Naive thymus-derived CD4-positive, alpha-beta T cell (primary cell): ENCODE measurements at regions of chr10 and their contacts with region 1.

Region 1: DNA sequence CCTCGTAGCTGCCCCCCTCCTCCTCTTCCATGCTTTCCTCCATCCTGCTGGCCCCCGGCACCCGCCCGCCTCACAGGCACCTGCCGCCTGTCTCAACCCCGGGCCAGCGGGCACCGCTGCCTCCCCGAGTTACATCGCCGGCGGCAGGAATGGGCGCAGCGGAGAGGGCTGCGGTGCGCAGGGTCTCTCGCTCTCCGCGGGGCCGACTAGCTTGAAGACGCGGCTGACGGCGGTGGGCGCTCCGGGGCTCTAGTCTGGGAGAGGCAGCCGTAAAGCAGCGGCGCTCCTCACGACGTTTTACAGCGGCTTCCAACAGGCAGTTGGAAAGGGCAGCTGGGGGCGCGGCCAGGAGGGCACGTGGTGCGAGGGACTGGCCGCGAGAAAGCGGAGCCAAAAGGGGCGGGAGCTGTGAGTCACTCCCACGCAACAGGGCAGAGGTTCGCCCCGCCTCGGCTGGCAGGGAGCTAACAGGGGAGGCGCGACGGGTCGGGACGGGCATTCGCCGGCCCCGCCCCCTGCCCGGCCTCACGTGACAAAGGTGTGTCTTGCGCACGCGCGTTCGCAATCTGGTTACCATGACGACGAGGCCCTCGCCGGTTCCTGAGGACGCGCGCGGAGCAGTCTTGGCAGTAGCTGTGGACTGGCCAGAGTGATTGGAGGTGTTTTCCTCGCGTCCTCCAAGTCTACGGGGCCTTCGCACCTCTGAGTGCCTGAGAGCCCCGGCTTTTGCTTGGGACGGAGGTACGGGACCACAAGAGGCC is at the start of gene CACUL1:
- DNase-seq: peak; percentile 99 to 100 (median 100)
- ATAC-seq: peak; percentile 99
- H3K4me3 ChIP-seq: peak within 1 kb of the TSS; percentile 92
- H3K4me3 Mint-ChIP-seq: peak within 1 kb of the TSS; percentile 92 to 98 (median 95)
- H3K27ac ChIP-seq: peak within 1 kb of the TSS; percentile 80
- H3K27ac Mint-ChIP-seq: peak within 1 kb of the TSS; percentile 86 to 96 (median 92)
- H3K4me1 ChIP-seq: peaks cover 17 to 24% of the 10 kb centered on the region in 2 donors
- H3K4me1 Mint-ChIP-seq: peaks cover 24 to 47% (median 40%) of the 10 kb centered on the region in 7 donors
- H3K27me3 ChIP-seq: no peaks in the 10 kb centered on the region
- H3K27me3 Mint-ChIP-seq: peaks cover 0 to 19% (median 0%) of the 10 kb centered on the region in 5 donors
- total RNA-seq, gene CACUL1: 28.0 to 66.6 (median 34.3) TPM

Region 2: DNA sequence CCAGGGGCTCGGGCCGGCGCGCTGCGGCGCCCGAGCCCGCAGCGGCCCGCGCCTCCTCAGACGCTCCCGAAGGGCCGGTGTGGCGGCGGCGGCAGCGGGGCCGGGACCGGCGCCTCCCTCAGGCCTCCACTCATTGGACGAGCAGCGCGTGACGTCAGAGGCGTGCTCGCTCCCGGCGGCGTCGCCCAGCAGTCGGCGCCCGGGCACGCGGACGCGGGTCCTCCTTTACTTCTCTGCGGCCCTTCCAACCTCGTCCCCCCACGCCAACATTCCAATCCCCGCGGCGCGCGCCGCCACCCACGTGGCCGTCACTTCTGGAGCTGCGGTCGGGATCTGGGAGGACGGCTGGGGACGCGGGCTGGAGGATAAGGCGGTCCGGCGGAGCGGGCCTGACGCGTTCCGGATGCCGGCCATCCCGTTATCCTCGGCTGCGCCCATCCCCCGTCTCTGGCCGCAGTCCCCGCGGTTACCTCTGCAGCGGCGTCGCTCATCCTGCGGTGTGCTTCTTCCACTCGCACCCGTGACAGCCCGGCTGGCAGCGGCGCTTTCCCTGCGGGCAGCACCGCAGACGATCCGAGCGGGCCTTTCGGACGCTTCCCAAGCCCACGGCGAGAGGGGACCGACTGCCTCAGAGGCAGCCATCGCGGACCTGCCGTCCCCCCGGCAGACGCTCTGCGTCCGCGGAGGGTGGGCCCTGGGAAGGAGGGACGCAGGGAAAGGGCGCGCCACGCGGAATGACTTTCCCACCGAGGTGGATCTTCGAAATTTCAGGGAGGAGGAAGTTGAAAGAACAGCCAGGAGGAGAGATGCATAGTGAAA is 1379.3 kb before region 1 on chr10 and contains the start of gene PDZD8:
- CTCF ChIA-PET with region 1: no interaction called
- POLR2A ChIA-PET with region 1: no interaction called
- intact Hi-C with region 1: loop called (anchors 1 to 10 kb)
- DNase-seq: peak; percentile 84 to 93 (median 89)
- ATAC-seq: peak; percentile 93
- H3K4me3 ChIP-seq: peak within 1 kb of the TSS; percentile 92
- H3K4me3 Mint-ChIP-seq: peak within 1 kb of the TSS; percentile 94 to 98 (median 96)
- H3K27ac ChIP-seq: peak within 1 kb of the TSS; percentile 78
- H3K27ac Mint-ChIP-seq: peak within 1 kb of the TSS; percentile 73 to 94 (median 92)
- H3K4me1 ChIP-seq: peaks cover 15 to 21% of the 10 kb centered on the region in 2 donors
- H3K4me1 Mint-ChIP-seq: peaks cover 21 to 36% (median 32%) of the 10 kb centered on the region in 7 donors
- H3K27me3 ChIP-seq: no peaks in the 10 kb centered on the region
- H3K27me3 Mint-ChIP-seq: peaks cover 6 to 45% (median 25%) of the 10 kb centered on the region in 5 donors
- total RNA-seq, gene PDZD8: 12.6 to 24.0 (median 17.1) TPM

Region 3: GRCh38 chr10:117391436-117392205 is 1363.3 kb before region 1 on chr10:
- CTCF ChIA-PET with region 1: no interaction called
- POLR2A ChIA-PET with region 1: no interaction called
- intact Hi-C with region 1: no loop called
- DNase-seq: no peak
- ATAC-seq: no peak
- H3K4me3 ChIP-seq: no peak overlapping the region
- H3K4me3 Mint-ChIP-seq: no peak overlapping the region
- H3K27ac ChIP-seq: no peak overlapping the region
- H3K27ac Mint-ChIP-seq: no peak overlapping the region
- H3K4me1 ChIP-seq: no peaks in the 10 kb centered on the region
- H3K4me1 Mint-ChIP-seq: no peaks in the 10 kb centered on the region
- H3K27me3 ChIP-seq: no peaks in the 10 kb centered on the region
- H3K27me3 Mint-ChIP-seq: peaks cover 18 to 60% (median 29%) of the 10 kb centered on the region in 5 donors

Region 4: DNA sequence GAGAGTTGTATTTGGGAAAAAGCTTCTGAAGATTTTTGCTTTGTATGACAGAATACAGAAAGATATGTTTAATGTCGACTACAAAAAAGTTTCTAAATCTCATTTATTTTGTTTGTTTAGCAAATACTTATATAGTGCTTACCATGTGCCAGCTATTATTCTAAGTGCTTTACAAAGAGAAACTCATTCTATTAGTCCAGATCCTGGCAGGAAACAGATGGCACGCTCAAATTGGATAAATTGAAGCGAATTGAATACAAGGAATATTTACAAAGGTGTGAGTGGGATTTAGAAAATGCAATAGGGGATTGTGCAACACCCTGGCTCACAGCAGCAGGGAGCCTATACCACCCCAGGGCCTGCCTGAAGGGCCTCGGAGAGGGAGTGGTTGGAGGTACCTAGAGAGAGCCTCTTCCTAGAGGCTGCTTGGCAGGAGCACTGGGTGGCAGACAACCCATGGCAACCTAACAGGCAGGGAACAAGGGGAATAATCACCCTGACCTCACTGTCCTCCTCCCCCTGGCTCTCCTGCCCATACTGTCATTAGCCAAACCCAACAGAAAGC is 385.2 kb before region 1 on chr10:
- CTCF ChIA-PET with region 1: no interaction called
- POLR2A ChIA-PET with region 1: no interaction called
- intact Hi-C with region 1: no loop called
- DNase-seq: no peak
- ATAC-seq: no peak
- H3K4me3 ChIP-seq: no peak overlapping the region
- H3K4me3 Mint-ChIP-seq: no peak overlapping the region
- H3K27ac ChIP-seq: no peak overlapping the region
- H3K27ac Mint-ChIP-seq: no peak overlapping the region
- H3K4me1 ChIP-seq: no peaks in the 10 kb centered on the region
- H3K4me1 Mint-ChIP-seq: no peaks in the 10 kb centered on the region
- H3K27me3 ChIP-seq: peaks cover 0 to 14% of the 10 kb centered on the region in 2 donors
- H3K27me3 Mint-ChIP-seq: peaks cover 29 to 44% (median 39%) of the 10 kb centered on the region in 5 donors

Region 5: GRCh38 chr10:118662228-118663035 is 92.5 kb before region 1 on chr10:
- CTCF ChIA-PET with region 1: no interaction called
- POLR2A ChIA-PET with region 1: no interaction called
- intact Hi-C with region 1: loop called in 1 of 2 experiments (anchors 1 kb)
- DNase-seq: peak in 7 of 9 donors; percentile 21 to 69 (median 49)
- ATAC-seq: peak; percentile 53
- H3K4me3 ChIP-seq: peak overlapping the region; percentile 27
- H3K4me3 Mint-ChIP-seq: peak overlapping the region in 9 of 10 donors; percentile 56 to 85 (median 69)
- H3K27ac ChIP-seq: no peak overlapping the region
- H3K27ac Mint-ChIP-seq: peak overlapping the region in 8 of 9 donors; percentile 69 to 94 (median 80)
- H3K4me1 ChIP-seq: peaks cover 19 to 58% of the 10 kb centered on the region in 2 donors
- H3K4me1 Mint-ChIP-seq: peaks cover 35 to 91% (median 74%) of the 10 kb centered on the region in 7 donors
- H3K27me3 ChIP-seq: no peaks in the 10 kb centered on the region
- H3K27me3 Mint-ChIP-seq: peaks cover 0 to 14% (median 0%) of the 10 kb centered on the region in 5 donors

Region 6: DNA sequence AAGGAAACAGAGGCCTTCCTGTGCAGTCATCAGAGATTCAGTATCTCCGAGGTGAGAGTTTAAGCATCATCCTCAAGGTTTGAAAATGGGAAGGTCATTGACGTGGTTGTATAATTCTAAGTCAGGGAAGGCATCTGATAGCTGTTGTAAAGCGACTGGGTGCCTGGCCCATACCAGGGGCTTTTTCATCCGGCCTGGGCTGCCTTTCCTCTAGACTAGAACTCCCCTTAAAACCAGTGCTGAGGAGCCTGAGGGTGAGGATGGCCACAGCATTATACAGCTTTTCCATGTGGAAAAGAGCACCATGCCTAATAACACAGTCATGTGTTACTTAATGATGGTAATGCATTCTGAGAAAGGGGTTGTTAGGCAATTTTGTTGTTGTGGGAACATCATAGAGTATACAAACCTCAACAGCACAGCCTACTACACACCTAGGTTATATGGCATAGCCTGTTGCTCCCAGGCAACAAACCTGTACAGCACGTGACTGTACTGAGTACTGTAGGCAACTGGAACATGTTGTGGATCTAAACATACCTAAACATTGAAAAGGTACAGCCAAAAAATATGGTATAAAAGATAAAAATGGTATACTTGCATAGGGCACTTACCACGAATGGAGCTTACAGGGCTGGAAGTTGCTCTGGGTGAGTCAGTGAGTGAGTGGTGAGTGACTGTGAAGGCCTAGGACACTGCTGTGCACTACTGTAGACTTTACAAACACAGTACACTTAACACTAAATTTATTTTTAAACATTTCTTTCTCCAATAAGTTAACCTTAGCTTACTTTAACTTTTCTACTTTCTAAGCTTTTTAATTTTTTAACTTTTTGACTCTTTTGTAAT is 13.4 kb after region 1 on chr10:
- CTCF ChIA-PET with region 1: no interaction called
- POLR2A ChIA-PET with region 1: no interaction called
- intact Hi-C with region 1: no loop called
- DNase-seq: no peak
- ATAC-seq: no peak
- H3K4me3 ChIP-seq: no peak overlapping the region
- H3K4me3 Mint-ChIP-seq: no peak overlapping the region
- H3K27ac ChIP-seq: no peak overlapping the region
- H3K27ac Mint-ChIP-seq: no peak overlapping the region
- H3K4me1 ChIP-seq: no peaks in the 10 kb centered on the region
- H3K4me1 Mint-ChIP-seq: no peaks in the 10 kb centered on the region
- H3K27me3 ChIP-seq: no peaks in the 10 kb centered on the region
- H3K27me3 Mint-ChIP-seq: peaks cover 0 to 6% (median 0%) of the 10 kb centered on the region in 5 donors

Region 7: GRCh38 chr10:119028900-119029612 is 274.2 kb after region 1 on chr10:
- CTCF ChIA-PET with region 1: no interaction called
- POLR2A ChIA-PET with region 1: no interaction called
- intact Hi-C with region 1: loop called (anchors 2 kb)
- DNase-seq: peak; percentile 50 to 81 (median 60)
- ATAC-seq: peak; percentile 85
- H3K4me3 ChIP-seq: peak overlapping the region; percentile 43
- H3K4me3 Mint-ChIP-seq: peak overlapping the region; percentile 59 to 87 (median 78)
- H3K27ac ChIP-seq: no peak overlapping the region
- H3K27ac Mint-ChIP-seq: peak overlapping the region in 3 of 9 donors; percentile 17 to 65 (median 55)
- H3K4me1 ChIP-seq: no peaks in the 10 kb centered on the region
- H3K4me1 Mint-ChIP-seq: peaks cover 6 to 24% (median 10%) of the 10 kb centered on the region in 7 donors
- H3K27me3 ChIP-seq: no peaks in the 10 kb centered on the region
- H3K27me3 Mint-ChIP-seq: peaks cover 0 to 12% (median 0%) of the 10 kb centered on the region in 5 donors

Region 8: GRCh38 chr10:119178372-119179119 is 423.6 kb after region 1 on chr10 and contains the start of gene PRDX3:
- CTCF ChIA-PET with region 1: no interaction called
- POLR2A ChIA-PET with region 1: no interaction called
- intact Hi-C with region 1: loop called (anchors 1 to 2 kb)
- DNase-seq: peak; percentile 81 to 96 (median 89)
- ATAC-seq: peak; percentile 100
- H3K4me3 ChIP-seq: peak within 1 kb of the TSS; percentile 97
- H3K4me3 Mint-ChIP-seq: peak within 1 kb of the TSS; percentile 91 to 99 (median 96)
- H3K27ac ChIP-seq: peak within 1 kb of the TSS; percentile 79
- H3K27ac Mint-ChIP-seq: peak within 1 kb of the TSS; percentile 86 to 98 (median 93)
- H3K4me1 ChIP-seq: peaks cover 7 to 13% of the 10 kb centered on the region in 2 donors
- H3K4me1 Mint-ChIP-seq: peaks cover 13 to 48% (median 36%) of the 10 kb centered on the region in 7 donors
- H3K27me3 ChIP-seq: no peaks in the 10 kb centered on the region
- H3K27me3 Mint-ChIP-seq: no peaks in the 10 kb centered on the region
- total RNA-seq, gene PRDX3: 11.7 to 120 (median 35.4) TPM

Region 9: GRCh38 chr10:119725828-119726675 is 971.2 kb after region 1 on chr10 and contains the start of gene INPP5F:
- CTCF ChIA-PET with region 1: no interaction called
- POLR2A ChIA-PET with region 1: no interaction called
- intact Hi-C with region 1: loop called (anchors 1 to 5 kb)
- DNase-seq: peak; percentile 95 to 100 (median 96)
- ATAC-seq: peak; percentile 98
- H3K4me3 ChIP-seq: peak within 1 kb of the TSS; percentile 78
- H3K4me3 Mint-ChIP-seq: peak within 1 kb of the TSS; percentile 89 to 95 (median 94)
- H3K27ac ChIP-seq: peak within 1 kb of the TSS; percentile 76
- H3K27ac Mint-ChIP-seq: peak within 1 kb of the TSS; percentile 71 to 92 (median 87)
- H3K4me1 ChIP-seq: peaks cover 11 to 24% of the 10 kb centered on the region in 2 donors
- H3K4me1 Mint-ChIP-seq: peaks cover 25 to 53% (median 38%) of the 10 kb centered on the region in 7 donors
- H3K27me3 ChIP-seq: no peaks in the 10 kb centered on the region
- H3K27me3 Mint-ChIP-seq: no peaks in the 10 kb centered on the region
- total RNA-seq, gene INPP5F: 8.5 to 12.1 (median 10.0) TPM